ENCODE measurements at regions of chr1 and their contacts with region 1.

Region 1: GRCh38 chr1:16984717-16985116 is 4.3 kb upstream of the MFAP2 start:
- DNase-seq: peak; percentile 63 to 80
- H3K4me3 ChIP-seq: no peak overlapping the region
- H3K27ac ChIP-seq: peak overlapping the region; percentile 48 to 68
- H3K4me1 ChIP-seq: no peaks in the 10 kb centered on the region
- H3K27me3 ChIP-seq: no peaks in the 10 kb centered on the region
- CTCF ChIP-seq: no peak
- POLR2A ChIP-seq: no peak

Region 2: DNA sequence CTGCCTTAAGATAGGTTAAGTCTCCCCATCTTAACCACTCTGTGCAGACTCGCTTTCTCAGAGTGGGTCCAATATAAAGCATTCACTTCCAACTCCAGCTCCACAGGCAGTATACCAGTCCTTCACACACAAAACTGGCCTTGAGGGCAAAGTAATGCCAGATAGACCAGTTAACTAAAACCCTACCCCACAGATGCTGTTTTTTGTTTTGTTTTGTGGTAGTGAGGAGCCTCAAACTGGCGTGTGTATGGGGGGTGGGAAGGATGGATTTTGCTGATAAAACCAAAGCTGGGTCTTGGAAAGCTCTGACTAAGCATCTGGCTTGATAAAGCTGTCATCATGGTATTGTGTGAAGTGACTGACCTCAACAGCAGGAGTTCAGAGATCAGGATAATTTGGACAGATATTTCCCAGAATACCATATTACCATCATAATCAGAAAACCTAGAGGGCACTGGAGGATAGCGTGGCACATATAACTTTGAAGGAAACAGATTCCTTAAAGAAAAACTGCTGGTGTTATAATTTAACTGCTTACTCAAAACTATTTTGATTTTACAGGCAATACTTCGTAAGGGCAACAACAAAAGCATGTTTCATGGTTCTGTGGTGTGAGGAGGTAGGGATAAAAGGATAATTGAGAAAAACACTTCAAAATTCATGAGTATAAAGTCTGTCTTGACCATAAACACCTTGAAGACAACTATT is 718.2 kb before region 1 on chr1:
- intact Hi-C with region 1: loop called (anchors 5 kb)
- DNase-seq: no peak
- H3K4me3 ChIP-seq: no peak overlapping the region
- H3K27ac ChIP-seq: no peak overlapping the region
- H3K4me1 ChIP-seq: peaks cover 0 to 3% of the 10 kb centered on the region in 2 donors
- H3K27me3 ChIP-seq: no peaks in the 10 kb centered on the region
- CTCF ChIP-seq: no peak
- POLR2A ChIP-seq: no peak